ENCODE measurements at regions of chr22 and their contacts with region 1.

Region 1: DNA sequence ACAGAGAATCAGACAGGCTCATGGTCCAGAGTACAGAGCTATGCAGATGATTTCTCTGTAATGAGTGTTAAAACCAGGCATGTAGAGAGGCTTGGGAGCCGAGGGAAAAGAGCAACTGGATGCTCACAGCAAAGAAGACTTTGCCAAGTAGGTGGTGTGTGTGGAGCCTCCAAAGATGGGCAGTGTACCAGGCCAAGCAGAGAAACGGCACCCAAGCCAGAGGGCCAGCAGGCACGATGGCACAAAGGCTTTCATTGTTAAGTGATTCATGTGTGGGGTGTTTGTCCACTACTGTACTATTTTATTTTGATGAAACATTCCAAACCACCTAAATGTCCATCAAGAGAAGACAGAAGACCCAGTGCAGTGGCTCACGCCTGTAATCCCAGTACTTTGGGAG is 11.1 kb downstream of the RANGAP1 start:
- DNase-seq: no peak
- ATAC-seq: peak; percentile 64
- H3K4me3 ChIP-seq: no peak overlapping the region
- H3K27ac ChIP-seq: no peak overlapping the region
- H3K4me1 ChIP-seq: no peaks in the 10 kb centered on the region
- H3K27me3 ChIP-seq: no peaks in the 10 kb centered on the region
- CTCF ChIP-seq: no peak

Region 2: DNA sequence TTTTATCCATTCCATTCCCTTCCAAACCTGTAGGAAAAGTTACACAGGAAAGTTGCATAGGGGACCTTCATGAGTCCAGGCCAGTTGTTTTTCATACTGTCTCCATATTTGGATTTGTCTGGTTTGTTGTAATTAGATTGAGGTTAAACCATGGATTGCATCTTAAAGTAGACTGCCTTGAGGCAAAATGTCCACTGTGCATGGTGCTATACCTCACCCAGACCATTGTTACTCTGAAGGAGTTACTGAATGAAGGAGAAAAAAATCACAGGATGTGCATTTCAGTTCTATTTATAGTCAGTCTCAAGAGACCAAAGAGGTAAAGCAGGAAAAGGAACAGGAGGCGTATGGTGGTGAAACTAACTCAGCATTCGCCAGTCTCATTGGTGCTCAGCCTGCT is 99.3 kb before region 1 on chr22:
- CTCF ChIA-PET with region 1: no interaction called
- POLR2A ChIA-PET with region 1: interaction called, 11 read pairs
- intact Hi-C with region 1: no loop called
- DNase-seq: no peak
- ATAC-seq: no peak
- H3K4me3 ChIP-seq: no peak overlapping the region
- H3K27ac ChIP-seq: no peak overlapping the region
- H3K4me1 ChIP-seq: no peaks in the 10 kb centered on the region
- H3K27me3 ChIP-seq: no peaks in the 10 kb centered on the region
- CTCF ChIP-seq: no peak

Region 3: GRCh38 chr22:41327124-41327523 is 52.3 kb after region 1 on chr22:
- CTCF ChIA-PET with region 1: no interaction called
- POLR2A ChIA-PET with region 1: no interaction called
- intact Hi-C with region 1: no loop called
- DNase-seq: no peak
- ATAC-seq: peak; percentile 27; the same call in 1 of the 2 replicates
- H3K4me3 ChIP-seq: no peak overlapping the region
- H3K27ac ChIP-seq: no peak overlapping the region
- H3K4me1 ChIP-seq: no peaks in the 10 kb centered on the region
- H3K27me3 ChIP-seq: no peaks in the 10 kb centered on the region
- CTCF ChIP-seq: no peak

Region 4: GRCh38 chr22:41816181-41816621 is 541.3 kb after region 1 on chr22:
- CTCF ChIA-PET with region 1: no interaction called
- POLR2A ChIA-PET with region 1: no interaction called
- intact Hi-C with region 1: no loop called
- DNase-seq: no peak
- ATAC-seq: no peak
- H3K4me3 ChIP-seq: no peak overlapping the region
- H3K27ac ChIP-seq: no peak overlapping the region
- H3K4me1 ChIP-seq: no peaks in the 10 kb centered on the region
- H3K27me3 ChIP-seq: no peaks in the 10 kb centered on the region
- CTCF ChIP-seq: no peak